CD14-positive monocyte (primary cell): ENCODE measurements at regions of chr6 and their contacts with region 1.

Region 1: DNA sequence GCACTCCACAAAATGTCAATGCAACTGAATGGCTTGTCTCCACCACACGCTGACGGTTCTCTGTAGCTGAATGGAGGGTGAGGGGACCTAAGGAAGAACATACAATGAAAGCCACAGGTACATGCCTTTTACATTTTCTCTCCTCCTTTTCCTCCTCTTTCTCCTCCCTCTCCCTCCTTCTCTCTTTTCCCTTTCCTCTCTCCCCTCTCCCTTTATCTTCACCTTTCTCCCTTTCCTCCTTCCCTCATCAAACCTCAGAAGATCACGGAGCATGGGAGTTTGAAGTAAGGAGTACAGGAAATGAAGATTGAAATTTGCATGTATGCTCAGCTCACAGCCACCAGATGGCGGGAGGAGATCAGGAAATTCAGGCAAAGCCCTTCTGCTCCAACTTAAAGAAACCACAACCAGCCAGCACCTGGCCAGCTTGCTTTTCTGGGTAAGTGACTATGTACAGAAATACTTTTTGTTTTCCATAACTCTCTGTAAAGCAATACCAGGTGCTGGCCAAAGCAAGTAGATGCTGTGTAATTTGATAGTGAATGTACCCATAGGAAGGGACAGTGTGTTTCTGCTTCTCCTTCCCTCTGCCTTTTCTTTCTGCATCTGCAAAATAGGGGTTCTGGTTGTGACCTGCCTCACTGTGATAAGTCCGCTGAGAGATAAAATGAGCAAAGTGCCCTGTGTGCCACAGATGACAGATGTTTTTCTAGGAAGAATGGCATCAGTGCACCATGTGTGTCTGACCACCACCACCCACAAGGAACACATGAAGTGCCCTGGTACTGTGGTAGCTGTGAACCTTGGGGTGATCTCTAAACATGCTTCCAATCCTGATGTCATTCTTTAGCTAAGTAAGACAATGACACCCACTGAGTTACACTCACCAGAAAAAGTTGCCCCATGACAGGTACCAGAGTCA is 18.6 kb upstream of the FOXO3 start:
- DNase-seq: peak; percentile 59 to 74 (median 72)
- H3K4me3 ChIP-seq: no peak overlapping the region
- H3K4me3 Mint-ChIP-seq: no peak overlapping the region
- H3K27ac ChIP-seq: no peak overlapping the region
- H3K27ac Mint-ChIP-seq: peak overlapping the region in 2 of 7 donors; percentile 6 to 19
- H3K4me1 ChIP-seq: peaks cover 10 to 12% of the 10 kb centered on the region in 2 donors
- H3K4me1 Mint-ChIP-seq: peaks cover 19% of the 10 kb centered on the region
- H3K27me3 ChIP-seq: no peaks in the 10 kb centered on the region
- H3K27me3 Mint-ChIP-seq: peaks cover 0 to 3% (median 2%) of the 10 kb centered on the region in 3 donors
- CTCF ChIP-seq: peak; percentile 95

Region 2: DNA sequence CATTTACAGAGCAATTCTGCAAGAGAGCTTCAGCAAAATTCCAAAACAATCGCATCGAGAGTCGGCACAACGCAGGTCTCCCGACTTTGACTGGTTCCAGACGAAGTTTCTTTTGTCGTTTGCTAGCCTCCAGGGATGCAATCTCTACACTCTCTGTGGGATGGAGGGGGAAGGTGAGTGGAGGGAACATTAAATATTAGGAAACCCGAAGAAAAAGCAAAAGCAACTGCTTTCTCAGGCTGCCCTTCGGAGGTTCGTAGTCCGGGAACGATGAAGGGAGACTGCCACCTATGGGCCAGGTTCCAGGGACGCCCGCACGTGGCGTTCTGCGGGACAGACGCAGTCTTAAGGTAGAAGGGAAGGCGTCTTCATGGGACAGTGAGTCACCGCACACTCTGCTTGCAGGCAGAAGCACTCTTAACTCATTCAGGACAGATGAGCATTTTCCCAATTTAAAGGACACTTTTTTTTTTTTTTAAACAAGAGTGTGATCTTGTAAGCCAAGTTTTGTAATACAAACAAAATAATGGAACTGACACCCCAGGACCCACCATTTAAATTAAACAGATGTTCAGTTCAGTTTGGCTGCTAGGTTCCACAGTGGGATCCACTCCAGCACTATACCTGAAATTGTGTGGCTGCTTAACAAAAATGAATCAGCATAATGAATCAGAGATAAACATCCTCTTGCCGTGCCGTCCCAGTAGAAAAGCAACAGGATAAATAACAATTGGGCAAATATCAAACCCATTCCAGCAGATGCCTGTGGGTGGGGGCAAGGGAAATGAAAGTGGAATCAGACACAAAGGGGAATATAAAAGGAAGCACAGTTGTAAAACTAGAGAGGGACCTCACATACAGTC is 240.3 kb after region 1 on chr6:
- intact Hi-C with region 1: loop called (anchors 5 to 10 kb)
- DNase-seq: peak; percentile 78 to 96 (median 84)
- H3K4me3 ChIP-seq: peak overlapping the region; percentile 29 to 73 (median 34)
- H3K4me3 Mint-ChIP-seq: peak overlapping the region; percentile 84 to 96
- H3K27ac ChIP-seq: peak overlapping the region in 1 of 2 donors; percentile 6
- H3K27ac Mint-ChIP-seq: peak overlapping the region in 6 of 7 donors; percentile 13 to 80 (median 67)
- H3K4me1 ChIP-seq: peaks cover 24 to 28% of the 10 kb centered on the region in 2 donors
- H3K4me1 Mint-ChIP-seq: peaks cover 29% of the 10 kb centered on the region
- H3K27me3 ChIP-seq: peaks cover 0 to 2% of the 10 kb centered on the region in 2 donors
- H3K27me3 Mint-ChIP-seq: peaks cover 8 to 19% (median 11%) of the 10 kb centered on the region in 3 donors
- CTCF ChIP-seq: peak; percentile 80

Region 3: GRCh38 chr6:108835218-108835850 is 293.2 kb after region 1 on chr6:
- intact Hi-C with region 1: loop called (anchors 1 to 2 kb)
- DNase-seq: peak; percentile 81 to 85 (median 83)
- H3K4me3 ChIP-seq: no peak overlapping the region
- H3K4me3 Mint-ChIP-seq: peak overlapping the region in 1 of 2 donors; percentile 89
- H3K27ac ChIP-seq: no peak overlapping the region
- H3K27ac Mint-ChIP-seq: peak overlapping the region in 3 of 7 donors; percentile 58 to 65 (median 62)
- H3K4me1 ChIP-seq: peaks cover 23 to 31% of the 10 kb centered on the region in 2 donors
- H3K4me1 Mint-ChIP-seq: peaks cover 39% of the 10 kb centered on the region
- H3K27me3 ChIP-seq: peaks cover 0 to 18% of the 10 kb centered on the region in 2 donors
- H3K27me3 Mint-ChIP-seq: peaks cover 23 to 34% (median 26%) of the 10 kb centered on the region in 3 donors
- CTCF ChIP-seq: peak; percentile 94

Region 4: GRCh38 chr6:108888745-108889144 is 346.6 kb after region 1 on chr6:
- intact Hi-C with region 1: loop called (anchors 5 kb)
- DNase-seq: peak; percentile 38 to 60 (median 39)
- H3K4me3 ChIP-seq: no peak overlapping the region
- H3K4me3 Mint-ChIP-seq: no peak overlapping the region
- H3K27ac ChIP-seq: no peak overlapping the region
- H3K27ac Mint-ChIP-seq: peak overlapping the region in 5 of 7 donors; percentile 15 to 73 (median 56)
- H3K4me1 ChIP-seq: peaks cover 13 to 16% of the 10 kb centered on the region in 2 donors
- H3K4me1 Mint-ChIP-seq: peaks cover 20% of the 10 kb centered on the region
- H3K27me3 ChIP-seq: no peaks in the 10 kb centered on the region
- H3K27me3 Mint-ChIP-seq: no peaks in the 10 kb centered on the region
- CTCF ChIP-seq: no peak

Region 5: DNA sequence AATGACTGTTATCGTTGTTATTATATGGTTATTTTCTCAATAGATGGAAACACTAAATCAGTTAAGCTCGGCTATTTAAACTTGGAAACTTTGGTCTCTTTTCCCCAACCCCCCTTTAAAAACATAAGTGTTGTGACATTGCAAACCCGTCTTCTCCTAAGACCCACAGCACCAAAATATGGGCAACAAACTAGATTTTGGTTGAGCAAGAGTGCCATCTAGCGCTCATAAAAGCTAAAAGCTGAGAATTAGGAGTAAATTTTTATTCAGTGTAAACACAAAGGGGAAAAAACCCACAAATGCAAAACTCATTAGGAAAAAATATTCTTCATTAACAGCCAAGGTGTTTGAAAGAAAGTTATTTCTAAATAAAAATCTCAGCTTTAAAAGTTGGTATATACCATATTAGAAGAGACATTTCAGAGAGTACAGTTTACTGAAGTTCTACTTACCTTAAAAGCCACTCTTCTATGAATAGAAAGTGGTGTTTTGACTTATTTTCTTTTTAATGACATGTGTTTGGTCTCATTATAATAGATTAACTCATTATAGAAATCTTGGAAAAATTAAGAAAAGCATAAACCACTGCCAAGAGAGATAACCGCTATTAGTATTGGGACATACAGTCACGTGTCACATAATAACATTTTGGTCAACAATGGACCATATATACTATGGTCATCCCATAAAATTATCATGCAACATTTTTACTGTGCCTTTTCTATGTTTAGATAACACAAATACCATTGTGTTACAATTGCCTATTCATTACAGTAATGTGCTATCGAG is 531.4 kb after region 1 on chr6:
- intact Hi-C with region 1: loop called (anchors 2 kb)
- DNase-seq: peak; percentile 56 to 77 (median 68)
- H3K4me3 ChIP-seq: no peak overlapping the region
- H3K4me3 Mint-ChIP-seq: no peak overlapping the region
- H3K27ac ChIP-seq: no peak overlapping the region
- H3K27ac Mint-ChIP-seq: peak overlapping the region in 1 of 7 donors; percentile 68
- H3K4me1 ChIP-seq: peaks cover 11 to 19% of the 10 kb centered on the region in 2 donors
- H3K4me1 Mint-ChIP-seq: peaks cover 21% of the 10 kb centered on the region
- H3K27me3 ChIP-seq: no peaks in the 10 kb centered on the region
- H3K27me3 Mint-ChIP-seq: no peaks in the 10 kb centered on the region
- CTCF ChIP-seq: peak; percentile 72